AG04450 (cell line): ENCODE measurements at regions of chr11 and their contacts with region 1.

Region 1: GRCh38 chr11:17384002-17384511 is 4.4 kb downstream of the KCNJ11 start:
- DNase-seq: peak; percentile 65
- H3K4me3 ChIP-seq: no peak overlapping the region
- H3K27ac ChIP-seq: no peak overlapping the region
- H3K27me3 ChIP-seq: peaks cover 6% of the 10 kb centered on the region
- CTCF ChIP-seq: peak; percentile 92

Region 2: DNA sequence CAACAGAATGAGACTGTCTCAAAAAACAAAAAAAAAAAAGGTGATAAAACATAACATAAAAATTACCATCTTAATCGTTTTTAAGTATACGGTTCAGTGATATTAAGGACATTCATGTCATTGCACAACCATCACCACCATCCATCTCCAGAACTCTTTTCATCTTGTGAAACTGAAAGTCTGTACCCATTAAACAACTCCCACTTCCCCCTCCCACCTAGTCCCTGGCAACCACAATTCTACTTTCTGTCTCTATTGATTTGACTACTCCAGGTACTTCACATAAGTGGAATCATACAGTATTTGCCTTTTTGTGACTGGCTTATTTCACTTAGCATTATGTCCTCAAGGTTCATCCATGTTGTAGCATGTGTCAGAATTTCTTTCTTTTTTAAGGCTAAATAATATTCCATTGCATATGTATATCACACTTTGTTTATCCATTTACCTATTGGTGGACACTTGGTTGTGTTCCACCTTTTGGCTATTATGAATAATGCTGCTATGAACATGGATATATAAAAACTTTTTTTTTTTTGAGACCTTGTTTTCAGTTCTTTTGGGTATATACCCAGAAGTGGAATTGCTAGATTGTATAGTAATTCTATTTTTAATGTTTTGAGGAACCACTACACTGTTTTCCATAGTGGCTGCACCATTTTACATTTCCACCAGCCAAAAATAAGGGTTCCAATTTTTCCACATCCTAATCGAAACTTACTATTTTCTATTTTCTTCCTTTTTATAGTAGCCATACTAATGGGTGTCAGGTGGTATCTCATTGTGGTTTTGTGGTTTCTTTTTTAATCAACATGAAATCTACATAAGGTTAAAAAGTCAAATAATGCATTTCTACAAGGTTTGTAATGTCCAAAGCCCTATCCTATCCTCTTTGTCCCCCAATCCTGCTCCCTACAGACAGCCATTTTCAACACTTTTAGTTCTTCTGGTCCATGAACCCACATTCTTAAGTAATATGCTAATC is 152.9 kb before region 1 on chr11:
- CTCF ChIA-PET with region 1: interaction called, 22 read pairs
- POLR2A ChIA-PET with region 1: no interaction called
- DNase-seq: no peak
- H3K4me3 ChIP-seq: no peak overlapping the region
- H3K27ac ChIP-seq: no peak overlapping the region
- H3K27me3 ChIP-seq: no peaks in the 10 kb centered on the region
- CTCF ChIP-seq: no peak

Region 3: GRCh38 chr11:17300372-17300771 is 83.7 kb before region 1 on chr11:
- CTCF ChIA-PET with region 1: no interaction called
- POLR2A ChIA-PET with region 1: no interaction called
- DNase-seq: no peak
- H3K4me3 ChIP-seq: no peak overlapping the region
- H3K27ac ChIP-seq: no peak overlapping the region
- H3K27me3 ChIP-seq: no peaks in the 10 kb centered on the region
- CTCF ChIP-seq: no peak

Region 4: GRCh38 chr11:17371614-17372013 is 12.4 kb before region 1 on chr11:
- CTCF ChIA-PET with region 1: interaction called, 41 read pairs
- POLR2A ChIA-PET with region 1: interaction called, 4 read pairs
- DNase-seq: no peak
- H3K4me3 ChIP-seq: no peak overlapping the region
- H3K27ac ChIP-seq: no peak overlapping the region
- H3K27me3 ChIP-seq: no peaks in the 10 kb centered on the region
- CTCF ChIP-seq: no peak

Region 5: DNA sequence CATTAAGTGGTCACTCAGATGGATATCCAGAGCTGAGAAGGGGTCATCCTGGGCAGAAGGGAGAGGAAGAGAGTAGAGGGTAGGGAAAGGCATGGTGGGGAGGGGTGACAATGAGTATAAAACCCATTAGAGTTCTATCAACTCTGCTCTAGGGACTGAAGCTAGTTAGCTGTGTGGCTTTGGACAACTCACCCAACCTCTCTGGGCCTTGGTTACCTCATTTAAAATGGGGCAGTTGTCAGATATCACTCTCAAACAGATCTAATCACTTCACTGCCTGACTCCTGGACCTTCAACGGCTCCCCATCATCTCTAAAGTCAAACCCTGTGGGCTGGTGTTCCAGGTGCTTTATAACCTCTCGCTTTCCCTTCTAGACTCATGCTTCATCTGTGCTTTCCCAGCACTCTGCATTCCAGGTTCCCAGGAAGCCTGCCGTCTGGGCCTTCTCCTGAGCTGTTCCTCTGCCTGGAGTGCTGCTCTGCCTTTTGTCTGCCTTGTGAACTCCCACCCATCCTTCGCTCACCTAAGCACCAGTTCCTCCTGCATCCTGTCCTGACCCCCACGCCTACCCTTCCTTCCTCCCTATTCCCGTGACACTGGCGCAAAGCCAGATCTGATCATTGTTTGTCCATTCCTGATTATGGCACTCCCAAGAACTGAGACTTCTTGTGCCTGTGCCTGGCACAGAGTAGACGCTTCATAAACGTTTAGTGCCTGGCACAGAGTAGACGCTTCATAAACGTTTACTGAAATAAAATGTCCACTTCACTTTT is 26.7 kb after region 1 on chr11:
- CTCF ChIA-PET with region 1: no interaction called
- POLR2A ChIA-PET with region 1: no interaction called
- DNase-seq: no peak
- H3K4me3 ChIP-seq: no peak overlapping the region
- H3K27ac ChIP-seq: no peak overlapping the region
- H3K27me3 ChIP-seq: peaks cover 5% of the 10 kb centered on the region
- CTCF ChIP-seq: no peak

Region 6: GRCh38 chr11:17463531-17464194 is 79.6 kb after region 1 on chr11:
- CTCF ChIA-PET with region 1: no interaction called
- POLR2A ChIA-PET with region 1: no interaction called
- DNase-seq: no peak
- H3K4me3 ChIP-seq: no peak overlapping the region
- H3K27ac ChIP-seq: no peak overlapping the region
- H3K27me3 ChIP-seq: no peaks in the 10 kb centered on the region
- CTCF ChIP-seq: no peak

Region 7: DNA sequence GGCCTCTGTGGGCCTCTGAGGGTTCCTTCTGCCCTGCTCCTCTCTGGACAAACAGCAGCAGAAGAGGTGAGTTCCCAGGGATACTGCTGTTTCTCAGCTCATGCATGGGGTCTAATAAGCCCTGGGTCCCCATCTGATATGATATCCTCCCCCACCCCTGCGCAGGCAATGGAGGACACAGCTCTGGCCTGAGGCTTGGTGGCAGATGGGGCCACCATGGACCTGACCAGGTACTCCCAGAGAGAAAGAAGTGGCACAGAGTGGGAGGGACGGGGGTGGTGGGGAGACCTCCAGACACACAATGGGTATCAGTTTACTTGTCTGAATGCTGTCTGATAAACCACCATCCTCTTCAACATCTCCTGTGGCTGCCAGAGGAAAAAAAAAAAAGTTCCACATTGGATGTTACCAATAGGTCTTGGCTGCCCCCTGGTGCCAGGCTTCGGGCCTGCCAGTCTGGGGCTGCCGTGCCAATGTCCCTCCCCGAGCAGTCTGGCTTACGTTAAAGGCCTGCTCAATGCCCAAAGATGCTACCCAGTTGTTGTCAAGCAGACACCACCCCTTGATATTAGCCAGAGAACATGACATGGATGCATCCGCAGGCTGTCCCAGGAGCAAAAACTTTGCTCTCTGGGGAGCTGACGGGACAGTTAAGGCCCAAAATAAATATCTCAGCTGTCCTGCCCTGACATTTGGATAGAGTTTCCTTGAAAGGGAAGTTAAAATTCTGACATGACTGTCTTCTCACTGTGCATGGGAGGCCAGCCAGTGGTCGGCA is 120.5 kb after region 1 on chr11:
- CTCF ChIA-PET with region 1: interaction called, 48 read pairs
- POLR2A ChIA-PET with region 1: no interaction called
- DNase-seq: peak; percentile 6
- H3K4me3 ChIP-seq: no peak overlapping the region
- H3K27ac ChIP-seq: no peak overlapping the region
- H3K27me3 ChIP-seq: peaks cover 7% of the 10 kb centered on the region
- CTCF ChIP-seq: peak; percentile 89

Region 8: DNA sequence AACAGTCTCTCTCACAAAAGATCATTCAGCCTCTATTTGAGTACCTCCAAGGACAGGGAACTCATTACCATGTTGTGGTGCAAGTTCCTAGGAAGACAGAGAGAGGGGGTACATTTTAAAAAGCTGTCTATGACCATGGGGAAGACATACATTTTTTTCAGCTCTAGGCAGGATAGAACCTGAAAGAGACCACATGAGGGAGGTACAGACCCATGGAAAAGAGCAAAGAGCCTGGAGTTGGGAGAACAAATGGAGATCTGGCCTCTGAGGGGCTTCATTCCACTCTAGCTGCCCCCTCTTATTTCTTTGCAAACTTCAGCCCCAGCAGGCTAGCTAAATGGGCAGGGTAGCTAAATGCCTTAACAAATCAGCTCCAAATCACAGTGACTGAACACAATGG is 386.9 kb after region 1 on chr11:
- CTCF ChIA-PET with region 1: no interaction called
- POLR2A ChIA-PET with region 1: no interaction called
- DNase-seq: no peak
- H3K4me3 ChIP-seq: no peak overlapping the region
- H3K27ac ChIP-seq: no peak overlapping the region
- H3K27me3 ChIP-seq: peaks cover 6% of the 10 kb centered on the region
- CTCF ChIP-seq: peak; percentile 50